OCI-LY7 (cell line): ENCODE measurements at regions of chr7 and their contacts with region 1.

Region 1: DNA sequence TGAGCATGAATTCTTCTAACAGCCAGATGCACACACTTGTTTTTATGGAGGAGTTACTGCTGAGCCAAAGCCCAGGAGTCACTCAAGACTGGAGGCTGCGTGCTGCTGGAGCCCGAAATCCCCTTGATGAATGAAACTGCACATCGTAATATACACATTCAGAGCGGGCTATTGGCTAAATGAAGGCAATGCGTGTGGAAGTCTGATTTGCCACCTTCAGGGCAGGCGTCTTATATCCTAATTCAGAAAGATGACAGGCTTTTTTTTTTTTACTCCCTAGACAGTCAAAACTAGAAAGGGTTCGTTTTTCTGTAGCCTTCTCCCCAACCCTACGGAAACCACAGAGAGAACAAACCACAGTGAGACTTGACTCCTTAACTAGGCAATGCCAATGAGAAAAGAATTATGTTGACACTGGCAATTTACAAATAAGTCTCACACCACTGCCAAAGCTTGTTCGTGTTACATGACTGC is 227.2 kb upstream of the KLF14 start:
- DNase-seq: peak; percentile 58
- H3K4me3 ChIP-seq: peak overlapping the region; percentile 63
- H3K27ac ChIP-seq: peak overlapping the region; percentile 79
- H3K4me1 ChIP-seq: peaks cover 61% of the 10 kb centered on the region
- CTCF ChIP-seq: no peak

Region 2: GRCh38 chr7:130896898-130897514 is 64.2 kb before region 1 on chr7:
- CTCF ChIA-PET with region 1: no interaction called
- POLR2A ChIA-PET with region 1: no interaction called
- intact Hi-C with region 1: no loop called
- DNase-seq: peak; percentile 72
- H3K4me3 ChIP-seq: no peak overlapping the region
- H3K27ac ChIP-seq: no peak overlapping the region
- H3K4me1 ChIP-seq: peaks cover 41% of the 10 kb centered on the region
- CTCF ChIP-seq: peak; percentile 77

Region 3: DNA sequence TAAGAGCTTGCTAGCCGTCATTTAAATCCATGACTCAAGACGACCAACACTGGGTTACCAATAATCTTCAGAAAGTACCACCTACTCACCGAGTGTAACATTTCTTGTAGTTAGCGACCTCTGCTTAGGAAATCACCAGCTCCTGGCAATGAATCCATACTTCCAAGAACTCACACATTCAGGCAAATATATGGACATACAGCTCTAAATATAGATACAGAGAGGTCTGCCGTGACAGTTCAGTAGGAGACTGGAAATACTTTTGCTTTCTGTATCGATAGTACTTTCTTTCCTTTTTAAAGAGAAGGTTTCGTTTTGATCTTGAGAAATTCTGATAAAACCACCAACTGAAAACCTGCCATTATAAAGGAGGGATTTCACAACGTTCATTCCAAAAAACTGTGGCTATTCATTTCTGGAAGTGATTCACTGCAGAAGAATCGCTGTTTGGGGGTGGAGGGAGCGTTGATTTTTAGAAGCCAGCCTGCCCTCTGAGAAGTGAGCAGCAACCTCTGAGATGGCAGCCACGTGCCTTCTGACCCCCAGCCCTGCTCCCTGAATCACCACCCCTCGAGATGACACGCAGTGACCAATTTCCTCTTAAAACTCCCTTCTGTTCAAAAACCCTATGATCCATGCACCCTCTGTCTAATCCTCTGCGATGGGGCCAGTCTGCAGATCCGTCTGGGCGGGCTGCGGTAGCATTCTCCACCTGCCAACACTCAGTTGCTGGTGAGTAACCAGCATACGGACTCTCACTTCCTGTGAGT is 48.1 kb before region 1 on chr7:
- CTCF ChIA-PET with region 1: no interaction called
- POLR2A ChIA-PET with region 1: interaction called, 8 read pairs
- intact Hi-C with region 1: loop called (anchors 2 kb)
- DNase-seq: peak; percentile 78
- H3K4me3 ChIP-seq: peak overlapping the region; percentile 74
- H3K27ac ChIP-seq: peak overlapping the region; percentile 79
- H3K4me1 ChIP-seq: peaks cover 26% of the 10 kb centered on the region
- CTCF ChIP-seq: no peak

Region 4: DNA sequence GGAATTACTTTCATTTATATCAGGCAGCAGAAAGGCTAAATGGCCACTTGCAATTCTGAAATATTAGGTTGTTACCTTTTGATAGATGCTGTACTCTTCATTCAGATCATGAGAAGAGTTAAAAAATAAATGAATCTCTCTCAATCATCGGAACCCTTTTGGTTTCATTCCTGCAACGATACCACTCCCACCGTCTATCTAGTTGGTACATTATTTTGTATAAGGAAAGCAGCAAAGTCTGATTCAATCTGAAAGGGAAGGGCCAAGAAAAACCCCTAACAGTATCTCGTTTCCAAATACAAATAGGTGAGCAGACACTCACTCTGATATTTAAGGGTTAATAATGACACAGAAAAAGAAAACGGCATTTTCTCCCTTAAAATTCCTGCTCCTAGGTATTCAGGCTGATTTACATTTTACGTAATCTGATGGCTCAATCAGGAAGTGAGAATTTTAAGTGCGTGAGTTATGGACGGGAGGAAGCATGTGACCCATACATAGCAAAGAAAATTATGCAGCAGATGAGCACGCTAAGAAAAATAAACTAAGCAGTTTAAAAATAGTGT is 17.7 kb before region 1 on chr7:
- CTCF ChIA-PET with region 1: no interaction called
- POLR2A ChIA-PET with region 1: interaction called, 32 read pairs
- intact Hi-C with region 1: no loop called
- DNase-seq: peak; percentile 35
- H3K4me3 ChIP-seq: peak overlapping the region; percentile 66
- H3K27ac ChIP-seq: peak overlapping the region; percentile 47
- H3K4me1 ChIP-seq: peaks cover 58% of the 10 kb centered on the region
- CTCF ChIP-seq: no peak

Region 5: GRCh38 chr7:131424219-131424822 is 463.2 kb after region 1 on chr7:
- CTCF ChIA-PET with region 1: no interaction called
- POLR2A ChIA-PET with region 1: no interaction called
- intact Hi-C with region 1: no loop called
- DNase-seq: peak; percentile 64
- H3K4me3 ChIP-seq: no peak overlapping the region
- H3K27ac ChIP-seq: no peak overlapping the region
- H3K4me1 ChIP-seq: peaks cover 7% of the 10 kb centered on the region
- CTCF ChIP-seq: peak; percentile 79